Dendritic cell treated with granulocyte-macrophage colony-stimulating factor and Interleukin-4, amounts not matched to agents 40 ng/mL and 50 ng/mL, for 4 days (primary cell): ENCODE measurements at regions of chr10 and their contacts with region 1.

Region 1: GRCh38 chr10:128035557-128035973 is 90.7 kb downstream of the MKI67 start:
- H3K4me3 Mint-ChIP-seq: no peak overlapping the region
- H3K27ac Mint-ChIP-seq: peak overlapping the region; percentile 65
- H3K4me1 Mint-ChIP-seq: peaks cover 35% of the 10 kb centered on the region
- H3K27me3 Mint-ChIP-seq: no peaks in the 10 kb centered on the region

Region 2: DNA sequence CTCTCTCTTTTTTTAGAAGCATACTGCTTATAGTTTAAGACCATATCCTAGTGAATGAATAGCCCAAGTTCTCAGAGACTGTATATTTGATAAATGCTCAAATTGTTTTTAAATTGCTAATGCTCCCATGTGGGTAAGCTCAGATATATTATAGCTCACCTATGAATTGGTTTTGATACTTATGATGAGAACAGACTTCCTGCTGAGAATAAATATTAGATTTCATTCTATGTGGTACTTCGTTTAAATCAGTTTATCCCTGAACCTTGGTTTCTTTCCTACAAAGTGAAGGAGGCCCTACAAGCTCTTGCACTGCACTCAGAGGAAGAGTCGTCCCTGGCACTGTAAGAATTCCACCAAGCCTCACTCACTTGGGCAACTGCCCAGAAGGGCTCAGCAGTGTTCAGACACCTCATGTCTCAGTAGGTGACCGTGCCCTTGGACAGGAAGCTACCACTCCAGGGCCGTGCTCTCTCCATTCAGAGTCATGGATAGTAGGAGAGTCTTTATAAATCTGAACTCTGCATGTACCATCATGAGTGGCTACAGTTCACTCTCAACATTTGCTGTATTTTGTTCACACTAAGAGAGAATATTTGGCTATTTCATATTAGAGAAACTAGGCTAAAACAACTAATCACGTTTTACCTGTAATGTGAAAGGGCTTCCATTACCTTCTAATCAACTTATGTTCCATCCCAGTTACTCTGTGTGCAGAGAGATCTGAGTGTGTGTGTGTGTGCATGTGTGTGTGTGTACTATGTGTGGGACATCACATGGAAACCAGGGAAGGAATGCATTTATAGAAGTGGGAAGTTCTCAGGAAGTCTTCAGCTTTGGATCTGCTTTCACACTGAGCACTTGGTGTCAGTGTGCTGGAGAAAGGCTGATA is 34.8 kb before region 1 on chr10:
- intact Hi-C with region 1: no loop called
- H3K4me3 Mint-ChIP-seq: no peak overlapping the region
- H3K27ac Mint-ChIP-seq: no peak overlapping the region
- H3K4me1 Mint-ChIP-seq: peaks cover 51% of the 10 kb centered on the region
- H3K27me3 Mint-ChIP-seq: no peaks in the 10 kb centered on the region

Region 3: DNA sequence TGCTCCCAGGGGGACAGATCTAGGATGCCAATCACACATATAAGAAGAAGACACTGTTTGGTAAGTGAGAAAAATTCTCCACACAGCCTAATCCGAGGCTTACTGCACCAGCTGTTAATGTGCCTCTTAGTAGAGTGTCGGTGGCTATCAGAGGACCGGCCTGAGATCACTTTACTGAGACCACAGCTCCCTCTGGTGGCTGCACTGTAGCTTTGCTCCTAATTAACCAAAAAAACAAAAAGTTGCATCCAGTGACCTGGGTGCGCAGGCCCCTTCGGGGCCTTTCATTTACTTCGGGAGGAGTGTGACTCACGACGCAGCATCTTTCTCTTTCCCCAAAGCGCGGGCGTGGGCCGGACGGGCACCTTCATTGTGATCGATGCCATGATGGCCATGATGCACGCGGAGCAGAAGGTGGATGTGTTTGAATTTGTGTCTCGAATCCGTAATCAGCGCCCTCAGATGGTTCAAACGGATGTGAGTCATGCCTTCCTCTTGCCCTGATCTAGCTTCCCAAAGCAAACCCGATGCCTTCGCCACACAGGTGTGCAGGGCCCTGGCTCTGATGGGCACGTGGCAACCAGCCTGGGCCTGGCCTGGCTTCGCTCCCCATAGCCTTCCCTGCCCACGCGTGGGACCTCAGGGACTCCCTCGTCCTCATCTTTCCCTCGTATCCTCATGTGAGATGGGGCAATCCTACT is 33.9 kb after region 1 on chr10:
- intact Hi-C with region 1: loop called (anchors 1 kb)
- H3K4me3 Mint-ChIP-seq: no peak overlapping the region
- H3K27ac Mint-ChIP-seq: peak overlapping the region; percentile 86
- H3K4me1 Mint-ChIP-seq: peaks cover 87% of the 10 kb centered on the region
- H3K27me3 Mint-ChIP-seq: no peaks in the 10 kb centered on the region